Dorsolateral prefrontal cortex (tissue), 120 donors: ENCODE measurements at regions of chr15 and their contacts with region 1.

Region 1: DNA sequence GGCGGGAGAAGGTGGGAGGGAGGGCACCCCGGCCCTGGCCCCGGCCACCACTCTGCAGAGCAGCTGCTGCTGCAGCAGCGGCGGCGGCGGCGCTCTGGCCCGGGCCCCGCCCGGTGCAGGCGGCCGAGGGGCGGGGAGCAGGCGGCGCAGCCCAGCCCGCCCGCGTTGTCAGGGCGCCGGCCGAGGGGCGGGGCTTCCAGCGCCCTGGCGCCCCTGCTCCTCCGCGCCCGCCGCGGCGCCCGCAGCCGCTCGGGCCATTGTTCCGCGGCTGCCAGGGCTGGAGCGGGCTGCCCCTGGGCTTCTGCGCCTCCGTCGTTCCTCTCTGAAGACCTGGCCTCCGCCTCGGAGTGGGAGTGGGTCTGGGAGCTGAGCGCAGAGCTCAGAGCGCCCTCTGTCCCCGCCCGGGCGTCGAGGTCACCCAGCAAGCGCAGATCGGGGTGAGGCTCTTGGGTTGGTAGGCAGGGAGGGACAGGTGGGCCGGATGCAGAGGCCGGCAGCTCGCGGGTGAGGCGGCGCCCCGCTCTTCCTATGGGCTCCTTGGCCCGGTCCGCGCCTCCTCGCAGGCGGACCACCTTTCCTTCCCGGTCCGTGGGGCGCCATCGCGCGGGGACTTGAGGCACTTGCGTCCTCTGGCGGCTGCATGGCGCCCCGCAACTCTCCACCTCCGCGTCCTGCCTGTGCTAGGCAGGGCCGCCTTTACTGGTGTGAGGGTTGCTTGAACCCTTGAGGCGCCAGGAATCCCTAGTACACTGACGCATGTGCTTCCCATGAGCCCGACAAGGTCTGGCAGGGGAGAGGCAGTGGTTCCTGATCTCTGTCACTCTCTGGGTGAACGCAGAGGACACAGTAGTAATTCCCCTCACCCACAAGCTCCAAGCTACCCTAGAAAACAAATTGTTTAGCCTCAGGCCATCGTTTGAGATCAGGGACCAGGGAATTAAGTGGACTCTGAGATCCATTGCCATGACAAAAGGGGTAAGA is at the start of gene LPCAT4:
- DNase-seq: peak; percentile 77 to 92 (median 88)
- H3K4me3 ChIP-seq: peak within 1 kb of the TSS; percentile 71 to 100 (median 92)
- H3K27ac ChIP-seq: peak within 1 kb of the TSS; percentile 78 to 100 (median 96)
- H3K27me3 ChIP-seq: no peaks in the 10 kb centered on the region
- CTCF ChIP-seq: peak; percentile 62 to 99 (median 96)
- total RNA-seq, gene LPCAT4: 71.1 to 266 (median 159) TPM

Region 2: GRCh38 chr15:34065941-34066340 is 301.4 kb before region 1 on chr15:
- intact Hi-C with region 1: loop called in 1 of 2 experiments (anchors 10 kb)
- DNase-seq: no peak
- H3K4me3 ChIP-seq: no peak overlapping the region
- H3K27ac ChIP-seq: no peak overlapping the region
- H3K27me3 ChIP-seq: no peaks in the 10 kb centered on the region
- CTCF ChIP-seq: no peak

Region 3: DNA sequence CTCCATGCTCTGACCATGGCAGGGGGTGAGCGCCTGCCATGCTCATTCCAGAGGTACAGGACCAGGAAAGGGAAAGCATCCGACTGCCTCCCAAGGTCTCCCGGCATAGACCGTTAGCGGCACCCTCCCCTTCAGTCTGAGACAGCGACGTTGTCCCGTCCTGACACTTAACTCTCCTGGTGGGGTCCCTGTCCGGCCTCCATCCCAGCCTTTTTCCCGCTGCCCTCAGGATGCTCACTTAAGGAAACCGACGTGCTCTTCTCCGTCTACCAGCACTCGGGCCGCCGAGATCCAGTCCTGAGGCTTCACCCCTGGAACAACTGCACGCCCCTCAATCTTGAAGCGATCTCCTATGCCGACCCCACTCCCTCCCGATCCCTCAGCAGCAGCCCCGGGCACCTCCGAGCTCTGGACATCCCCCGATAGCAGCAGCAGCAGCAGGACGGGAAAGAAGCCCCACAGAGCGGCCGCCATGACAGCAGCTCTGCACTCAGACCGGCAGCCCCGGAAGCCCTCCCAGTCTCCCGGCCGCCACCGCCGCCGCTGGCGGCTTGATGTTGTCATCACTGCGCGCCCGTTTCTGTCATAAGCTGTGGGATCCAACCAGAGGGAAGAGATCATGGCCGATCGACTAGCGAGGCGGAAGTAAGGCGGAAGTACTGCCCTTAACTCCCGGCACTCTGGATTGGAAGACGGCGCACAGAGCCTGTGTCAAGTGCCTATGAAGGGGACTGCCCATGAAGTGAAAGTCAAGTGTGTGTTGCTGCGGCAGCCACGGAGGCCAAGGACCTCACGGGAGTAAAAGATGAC is 265.8 kb before region 1 on chr15 and contains the starts of genes EMC7 and PGBD4:
- intact Hi-C with region 1: loop called (anchors 5 kb)
- DNase-seq: peak; percentile 97 to 99 (median 98)
- H3K4me3 ChIP-seq: peak within 1 kb of the TSS; percentile 64 to 99 (median 91)
- H3K27ac ChIP-seq: peak within 1 kb of the TSS; percentile 27 to 93 (median 85)
- H3K27me3 ChIP-seq: no peaks in the 10 kb centered on the region
- CTCF ChIP-seq: peak in 34 of 56 donors; percentile 7 to 56 (median 28)
- total RNA-seq, gene EMC7: 37.5 to 71.0 (median 53.4) TPM
- total RNA-seq, gene PGBD4: 2.6 to 6.9 (median 4.9) TPM

Region 4: GRCh38 chr15:34209421-34210282 is 157.7 kb before region 1 on chr15 and contains the start of gene KATNBL1:
- intact Hi-C with region 1: loop called in 1 of 2 experiments (anchors 5 kb)
- DNase-seq: peak; percentile 91 to 97 (median 94)
- H3K4me3 ChIP-seq: peak within 1 kb of the TSS; percentile 47 to 85 (median 73)
- H3K27ac ChIP-seq: peak within 1 kb of the TSS in 39 of 59 donors; percentile 2 to 81 (median 60)
- H3K27me3 ChIP-seq: no peaks in the 10 kb centered on the region
- CTCF ChIP-seq: peak; percentile 87 to 99 (median 97)
- total RNA-seq, gene KATNBL1: 37.3 to 94.1 (median 63.6) TPM

Region 5: DNA sequence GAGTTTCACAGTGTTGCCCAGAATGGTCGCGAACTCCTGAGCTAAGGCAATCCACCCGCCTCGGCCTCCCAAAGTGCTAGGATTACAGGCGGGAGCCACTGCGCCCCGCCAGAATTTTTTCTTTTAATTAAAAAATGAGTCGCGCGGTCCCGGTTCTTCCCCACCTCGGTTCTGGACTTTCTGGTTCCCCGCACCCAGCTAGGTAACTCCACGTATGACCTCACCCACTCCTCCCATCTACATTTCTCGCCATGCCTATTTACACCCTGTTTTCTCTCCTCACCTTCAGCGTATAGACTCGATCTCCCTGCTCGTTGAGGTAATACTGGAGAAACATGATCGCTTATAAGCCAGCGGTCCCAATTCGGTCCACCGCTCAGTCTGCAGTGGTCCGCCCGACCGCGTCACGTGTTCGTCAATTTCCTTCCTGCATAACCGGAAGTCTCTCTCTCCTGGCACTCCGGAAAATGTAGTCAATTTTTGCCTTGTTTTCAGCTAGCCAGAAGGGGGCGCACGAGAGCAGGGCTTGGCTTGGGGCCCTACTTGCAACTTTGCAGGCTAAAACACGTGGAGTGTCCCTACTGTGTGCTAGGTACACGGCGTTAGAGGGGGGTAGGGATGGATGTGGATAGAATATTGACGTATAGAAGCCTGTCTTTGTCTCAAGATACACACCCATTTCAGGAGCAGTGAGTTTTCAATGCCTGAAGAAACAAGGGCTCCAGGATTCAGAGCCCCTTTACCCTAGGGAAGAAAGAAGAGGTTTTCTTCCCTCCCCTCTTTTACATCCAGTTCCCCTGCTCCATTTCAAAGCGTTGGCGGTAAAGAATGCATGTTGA is 24.4 kb before region 1 on chr15 and contains the starts of genes NOP10 and NUTM1:
- intact Hi-C with region 1: loop called (anchors 1 to 2 kb)
- DNase-seq: peak; percentile 82 to 93 (median 91)
- H3K4me3 ChIP-seq: peak within 1 kb of the TSS; percentile 61 to 98 (median 83)
- H3K27ac ChIP-seq: peak within 1 kb of the TSS in 58 of 59 donors; percentile 46 to 95 (median 84)
- H3K27me3 ChIP-seq: no peaks in the 10 kb centered on the region
- CTCF ChIP-seq: peak; percentile 86 to 99 (median 95)
- total RNA-seq, gene NOP10: 27.3 to 73.6 (median 47.5) TPM
- total RNA-seq, gene NUTM1: not detected

Region 6: DNA sequence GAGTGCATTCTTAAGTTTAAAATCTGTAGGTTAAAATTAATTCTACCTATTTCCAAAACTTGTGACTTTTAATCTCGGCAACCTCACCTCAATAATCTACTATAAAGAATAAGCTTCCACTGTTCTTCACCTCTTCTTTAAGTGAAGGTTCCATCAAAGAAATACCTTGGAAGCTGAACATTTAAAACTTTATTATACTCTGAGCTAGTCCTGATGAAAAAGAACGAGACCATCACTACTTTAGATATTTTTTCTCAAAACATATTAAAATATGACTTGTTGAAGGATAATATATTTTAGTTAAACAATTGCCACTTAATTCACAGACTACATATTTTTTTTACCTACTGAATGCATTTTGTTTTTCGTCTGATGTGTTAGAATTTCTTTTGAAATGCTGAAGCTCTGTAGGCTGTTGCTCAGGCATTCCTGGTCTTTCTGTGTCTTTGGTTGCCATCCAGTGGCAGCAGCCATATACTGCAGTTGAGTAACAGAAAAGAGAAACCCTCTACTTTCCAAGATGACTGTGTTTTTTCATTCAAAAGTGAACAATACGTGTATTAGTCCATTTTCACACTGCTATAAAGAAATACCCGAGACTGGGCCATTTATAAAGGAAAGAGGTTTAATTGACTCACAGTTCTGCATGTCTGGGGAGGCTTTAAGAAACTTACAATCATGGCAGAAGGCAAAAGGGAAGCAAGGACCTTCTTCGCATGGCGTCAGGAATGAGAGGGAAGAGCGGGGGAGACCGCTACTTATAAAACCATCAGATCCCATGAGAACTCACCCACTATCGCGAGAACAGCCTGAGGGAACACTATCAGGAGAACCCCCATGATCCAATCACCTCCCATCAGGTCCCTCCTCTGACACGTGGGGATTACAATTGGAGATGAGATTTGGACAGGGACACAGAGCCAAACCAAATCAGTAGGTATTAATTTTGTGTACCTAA is 220.6 kb after region 1 on chr15:
- intact Hi-C with region 1: loop called (anchors 5 to 10 kb)
- DNase-seq: peak in 7 of 10 donors; percentile 51 to 82 (median 62)
- H3K4me3 ChIP-seq: peak overlapping the region; percentile 8 to 63 (median 45)
- H3K27ac ChIP-seq: peak overlapping the region in 32 of 59 donors; percentile 6 to 83 (median 57)
- H3K27me3 ChIP-seq: no peaks in the 10 kb centered on the region
- CTCF ChIP-seq: peak; percentile 58 to 90 (median 82)